ENCODE measurements at regions of chr15 and their contacts with region 1.

Region 1: DNA sequence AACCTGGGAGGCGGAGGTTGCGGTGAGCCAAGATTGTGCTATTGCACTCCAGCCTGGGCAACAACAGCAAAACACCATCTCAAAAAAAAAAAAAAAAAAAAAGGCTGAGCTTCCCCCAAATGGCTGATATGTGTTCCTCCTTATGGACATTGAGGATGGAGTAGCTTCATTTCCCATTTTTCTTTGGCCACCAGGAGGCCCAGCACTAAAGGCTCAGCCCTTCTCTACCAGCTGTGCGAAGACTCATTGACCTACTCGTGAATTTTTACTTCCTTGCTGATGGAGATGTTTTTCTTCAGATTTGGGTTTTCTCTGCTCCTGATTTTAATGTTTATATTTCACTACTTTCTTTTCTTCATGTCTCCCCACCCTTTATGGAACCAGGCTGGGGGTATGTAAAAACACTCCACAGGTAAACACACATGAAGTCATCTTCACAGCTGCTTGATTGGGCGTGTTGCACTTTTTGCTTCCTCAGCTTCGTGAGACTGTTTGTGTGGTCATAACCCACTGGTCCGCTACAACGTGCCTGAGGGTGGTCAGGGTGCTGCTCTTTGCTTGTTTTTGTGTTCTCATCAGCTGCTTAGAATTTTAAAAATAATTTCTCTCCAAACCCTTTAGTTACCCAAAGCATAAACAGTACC is 13.5 kb downstream of the SEMA4B start:
- DNase-seq: no peak
- H3K4me3 Mint-ChIP-seq: no peak overlapping the region
- H3K27ac Mint-ChIP-seq: no peak overlapping the region
- H3K4me1 Mint-ChIP-seq: peaks cover 39% of the 10 kb centered on the region
- H3K27me3 Mint-ChIP-seq: no peaks in the 10 kb centered on the region
- CTCF ChIP-seq: peak; percentile 23

Region 2: DNA sequence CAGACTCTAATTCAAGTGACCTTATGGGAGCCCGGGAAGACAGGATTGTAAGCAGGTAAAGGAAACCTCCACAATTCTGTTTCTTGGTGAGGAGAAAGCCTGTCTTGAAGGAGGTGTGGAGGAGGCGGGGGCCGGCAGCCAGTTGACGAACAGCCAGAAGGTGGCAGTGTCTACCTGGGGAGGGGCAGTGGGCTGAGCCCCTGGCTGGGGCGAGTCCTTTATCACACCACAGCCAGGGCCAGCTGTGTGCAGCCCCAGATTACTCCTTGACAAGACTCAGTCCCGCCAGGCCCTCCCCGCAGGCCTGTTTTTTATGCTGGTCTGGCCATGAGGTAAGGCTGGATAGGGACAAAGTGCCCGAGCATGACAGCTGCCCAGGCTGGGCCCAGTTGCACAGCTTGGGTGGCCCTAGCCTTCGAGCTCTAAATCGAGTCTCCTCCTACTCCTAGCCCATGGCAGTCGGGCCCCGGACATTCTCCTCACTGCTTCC is 71.5 kb before region 1 on chr15:
- CTCF ChIA-PET with region 1: interaction called, 15 read pairs
- POLR2A ChIA-PET with region 1: interaction called, 3 read pairs
- intact Hi-C with region 1: no loop called
- DNase-seq: peak; percentile 69
- H3K4me3 Mint-ChIP-seq: no peak overlapping the region
- H3K27ac Mint-ChIP-seq: no peak overlapping the region
- H3K4me1 Mint-ChIP-seq: no peaks in the 10 kb centered on the region
- H3K27me3 Mint-ChIP-seq: no peaks in the 10 kb centered on the region
- CTCF ChIP-seq: peak; percentile 85

Region 3: GRCh38 chr15:90165659-90166421 is 48.8 kb before region 1 on chr15:
- CTCF ChIA-PET with region 1: interaction called, 13 read pairs
- POLR2A ChIA-PET with region 1: interaction called, 13 read pairs
- intact Hi-C with region 1: no loop called
- DNase-seq: peak; percentile 99
- H3K4me3 Mint-ChIP-seq: peak overlapping the region; percentile 25
- H3K27ac Mint-ChIP-seq: peak overlapping the region; percentile 66
- H3K4me1 Mint-ChIP-seq: peaks cover 30% of the 10 kb centered on the region
- H3K27me3 Mint-ChIP-seq: no peaks in the 10 kb centered on the region
- CTCF ChIP-seq: no peak

Region 4: GRCh38 chr15:90184786-90185569 is 29.7 kb before region 1 on chr15:
- CTCF ChIA-PET with region 1: interaction called, 43 read pairs
- POLR2A ChIA-PET with region 1: interaction called, 99 read pairs
- intact Hi-C with region 1: loop called (anchors 2 kb)
- DNase-seq: peak; percentile 84
- H3K4me3 Mint-ChIP-seq: peak overlapping the region; percentile 88
- H3K27ac Mint-ChIP-seq: peak overlapping the region; percentile 89
- H3K4me1 Mint-ChIP-seq: peaks cover 22% of the 10 kb centered on the region
- H3K27me3 Mint-ChIP-seq: no peaks in the 10 kb centered on the region
- CTCF ChIP-seq: no peak

Region 5: DNA sequence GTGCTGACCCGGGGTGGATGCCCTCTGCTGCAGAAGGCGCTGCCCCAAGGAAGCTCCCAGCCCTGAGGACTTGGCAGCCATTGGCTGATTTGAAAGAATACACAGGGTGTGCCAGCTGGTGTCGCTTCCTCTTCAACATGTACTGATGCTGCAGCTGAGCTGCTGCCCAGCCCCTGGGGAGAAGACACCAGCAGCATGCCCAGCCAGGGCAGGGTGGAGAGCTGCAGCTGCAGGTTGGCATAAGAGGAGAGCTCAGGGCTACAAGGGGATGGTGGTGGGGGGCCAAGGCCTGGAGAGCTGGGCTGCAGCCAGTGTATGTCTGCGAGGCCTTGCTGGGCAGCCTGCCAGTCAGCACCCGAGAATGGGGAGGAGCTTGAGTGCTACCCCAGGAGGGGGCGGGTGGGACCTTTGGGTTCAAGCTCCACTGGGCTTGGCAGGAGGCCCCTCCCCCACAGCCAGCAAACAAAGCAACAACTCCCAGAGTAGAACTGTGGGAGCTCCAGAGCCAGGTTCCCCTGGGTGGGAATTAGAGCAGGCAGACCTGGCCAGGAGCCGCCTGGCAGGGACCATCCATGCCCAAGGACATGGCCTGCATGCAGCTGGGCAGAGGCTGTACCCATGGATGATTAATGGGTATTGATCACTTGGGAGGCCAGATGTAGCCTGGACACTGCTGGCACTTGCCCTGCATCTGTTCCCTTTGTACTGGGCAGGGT is 22.7 kb before region 1 on chr15:
- CTCF ChIA-PET with region 1: interaction called, 43 read pairs
- POLR2A ChIA-PET with region 1: interaction called, 99 read pairs
- intact Hi-C with region 1: no loop called
- DNase-seq: peak; percentile 92
- H3K4me3 Mint-ChIP-seq: peak overlapping the region; percentile 58
- H3K27ac Mint-ChIP-seq: peak overlapping the region; percentile 88
- H3K4me1 Mint-ChIP-seq: peaks cover 31% of the 10 kb centered on the region
- H3K27me3 Mint-ChIP-seq: no peaks in the 10 kb centered on the region
- CTCF ChIP-seq: no peak

Region 6: GRCh38 chr15:90201130-90201949 is 13.3 kb before region 1 on chr15 and contains the start of gene SEMA4B:
- CTCF ChIA-PET with region 1: interaction called, 6 read pairs
- POLR2A ChIA-PET with region 1: interaction called, 81 read pairs
- intact Hi-C with region 1: no loop called
- DNase-seq: peak; percentile 51
- H3K4me3 Mint-ChIP-seq: peak within 1 kb of the TSS; percentile 78
- H3K27ac Mint-ChIP-seq: no peak within 1 kb of the TSS
- H3K4me1 Mint-ChIP-seq: peaks cover 27% of the 10 kb centered on the region
- H3K27me3 Mint-ChIP-seq: no peaks in the 10 kb centered on the region
- CTCF ChIP-seq: no peak
- total RNA-seq, gene SEMA4B: 38.6 and 46.4 TPM in 2 replicates